BJ (cell line): ENCODE measurements at regions of chr7 and their contacts with region 1.

Region 1: GRCh38 chr7:1432411-1433082 is 26.7 kb downstream of the MICALL2 start:
- DNase-seq: no peak
- H3K4me3 ChIP-seq: no peak overlapping the region
- H3K27me3 ChIP-seq: no peaks in the 10 kb centered on the region
- CTCF ChIP-seq: peak; percentile 95

Region 2: GRCh38 chr7:1225441-1226185 is 206.9 kb before region 1 on chr7:
- CTCF ChIA-PET with region 1: interaction called, 19 read pairs
- POLR2A ChIA-PET with region 1: no interaction called
- DNase-seq: no peak
- H3K4me3 ChIP-seq: no peak overlapping the region
- H3K27me3 ChIP-seq: peaks cover 54% of the 10 kb centered on the region
- CTCF ChIP-seq: peak; percentile 50

Region 3: DNA sequence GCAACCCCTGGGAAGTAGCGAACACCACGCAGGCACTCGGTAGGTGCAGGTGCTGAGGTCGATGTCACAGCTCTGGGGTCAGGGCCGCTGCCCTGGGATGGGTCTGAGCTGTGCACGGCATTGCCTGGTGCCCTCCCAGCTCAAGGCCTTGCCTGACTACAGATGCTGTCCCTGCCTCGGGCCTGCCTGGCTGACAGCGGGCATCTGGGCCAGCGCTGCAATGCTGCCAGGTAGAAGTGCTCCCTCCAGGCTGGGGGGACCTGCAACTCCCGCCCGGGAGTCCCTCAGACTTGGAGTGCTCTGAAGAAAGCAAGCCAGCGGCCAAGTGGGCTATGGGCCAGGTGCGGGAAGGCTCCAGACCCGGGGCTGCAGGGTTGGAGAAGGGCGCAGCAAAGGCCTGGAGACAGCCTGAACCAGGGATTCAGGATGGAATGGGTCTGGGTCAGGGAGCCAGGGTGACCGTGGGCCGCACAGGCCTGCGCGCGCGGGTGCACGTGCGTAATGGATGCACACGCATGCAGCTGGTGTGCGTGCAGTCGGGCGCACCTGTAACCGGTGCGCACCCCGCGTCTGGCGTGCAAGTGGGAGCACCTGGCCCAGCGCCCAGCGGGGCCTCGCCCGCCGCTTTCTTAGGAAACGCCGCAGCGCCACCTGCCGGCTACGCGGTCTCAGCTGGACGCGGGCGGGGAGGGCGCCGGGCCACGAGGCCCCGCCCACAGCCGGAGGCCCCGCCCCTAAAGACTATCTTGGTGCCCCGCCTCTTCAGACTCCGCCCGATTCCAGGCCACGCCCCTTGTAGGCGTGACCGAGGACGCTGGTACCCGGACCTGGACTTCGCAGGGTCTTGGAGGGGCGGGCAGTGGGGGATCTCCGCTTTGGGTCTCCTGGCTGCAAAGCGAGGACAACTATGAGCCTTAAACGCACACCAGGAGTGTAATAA is 20.0 kb before region 1 on chr7:
- CTCF ChIA-PET with region 1: interaction called, 11 read pairs
- POLR2A ChIA-PET with region 1: no interaction called
- DNase-seq: no peak
- H3K4me3 ChIP-seq: no peak overlapping the region
- H3K27me3 ChIP-seq: peaks cover 4% of the 10 kb centered on the region
- CTCF ChIP-seq: peak; percentile 49

Region 4: GRCh38 chr7:1418505-1419309 is 13.8 kb before region 1 on chr7:
- CTCF ChIA-PET with region 1: interaction called, 18 read pairs
- POLR2A ChIA-PET with region 1: no interaction called
- DNase-seq: no peak
- H3K4me3 ChIP-seq: no peak overlapping the region
- H3K27me3 ChIP-seq: peaks cover 10% of the 10 kb centered on the region
- CTCF ChIP-seq: no peak

Region 5: DNA sequence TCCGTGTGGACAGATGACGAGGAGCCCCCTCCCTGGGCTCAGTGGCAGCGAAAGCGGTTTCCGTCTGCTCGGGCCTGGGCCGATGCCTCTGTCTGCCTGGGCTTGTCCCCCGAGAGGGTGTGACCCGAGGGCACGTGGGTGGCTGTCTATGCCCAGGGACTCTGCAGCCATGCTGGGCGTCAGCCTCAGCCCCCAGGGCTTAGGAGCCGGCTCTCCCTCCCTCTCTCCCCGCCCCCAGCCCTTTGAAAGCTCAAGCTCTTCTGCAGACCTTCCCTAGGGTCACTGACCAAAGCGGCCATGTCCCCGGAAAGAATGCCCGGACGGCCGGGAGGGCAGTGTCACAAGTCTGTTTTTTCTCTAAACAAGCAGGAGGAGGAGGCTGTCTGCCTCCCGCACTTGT is 19.7 kb after region 1 on chr7:
- CTCF ChIA-PET with region 1: interaction called, 10 read pairs
- POLR2A ChIA-PET with region 1: no interaction called
- DNase-seq: no peak
- H3K4me3 ChIP-seq: no peak overlapping the region
- H3K27me3 ChIP-seq: no peaks in the 10 kb centered on the region
- CTCF ChIP-seq: no peak

Region 6: GRCh38 chr7:1473864-1474512 is 41.4 kb after region 1 on chr7:
- CTCF ChIA-PET with region 1: interaction called, 36 read pairs
- POLR2A ChIA-PET with region 1: no interaction called
- DNase-seq: no peak
- H3K4me3 ChIP-seq: no peak overlapping the region
- H3K27me3 ChIP-seq: no peaks in the 10 kb centered on the region
- CTCF ChIP-seq: peak; percentile 93